Activated T-helper 2 cell treated with anti-CD3 and anti-CD28 coated beads, Interferon-gamma antibody, Interleukin-2, Interleukin-4, amounts not matched to agents 10 μg/mL and 5 μg/mL and 100 μg/mL, durations not matched to agents 14 hours and 24 hours and 36 hours (primary cell): ENCODE measurements at regions of chr5 and their contacts with region 1.

Region 1: GRCh38 chr5:134140530-134141201 is 26.2 kb downstream of the TCF7 start:
- DNase-seq: peak; percentile 50
- H3K4me3 Mint-ChIP-seq: no peak overlapping the region
- H3K27ac Mint-ChIP-seq: no peak overlapping the region
- H3K4me1 Mint-ChIP-seq: peaks cover 44% of the 10 kb centered on the region
- H3K27me3 Mint-ChIP-seq: peaks cover 3% of the 10 kb centered on the region

Region 2: DNA sequence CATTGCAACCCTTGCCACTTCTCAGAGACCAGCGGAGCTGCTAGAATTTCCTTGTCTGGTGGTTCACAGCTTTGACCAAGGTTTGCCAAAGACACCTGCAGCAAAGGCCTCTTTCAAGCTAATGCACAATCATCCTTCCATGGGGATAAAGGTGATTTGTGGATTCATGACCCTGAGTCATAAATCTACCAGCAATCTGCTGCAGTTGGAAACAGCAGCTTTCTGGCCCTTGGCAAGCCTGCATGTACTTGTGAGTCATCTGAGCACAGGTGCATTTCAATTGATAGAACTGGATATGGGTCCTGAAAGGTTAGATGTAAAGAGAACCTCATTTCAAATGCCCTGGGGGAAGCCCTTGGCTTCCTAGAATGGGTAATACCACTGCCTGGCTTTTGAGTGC is 47.8 kb before region 1 on chr5:
- intact Hi-C with region 1: no loop called
- DNase-seq: no peak
- H3K4me3 Mint-ChIP-seq: no peak overlapping the region
- H3K27ac Mint-ChIP-seq: no peak overlapping the region
- H3K4me1 Mint-ChIP-seq: peaks cover 31% of the 10 kb centered on the region
- H3K27me3 Mint-ChIP-seq: peaks cover 73% of the 10 kb centered on the region

Region 3: GRCh38 chr5:134113902-134114875 is 26.5 kb before region 1 on chr5 and contains the start of gene TCF7:
- intact Hi-C with region 1: loop called (anchors 2 kb)
- DNase-seq: peak; percentile 61
- H3K4me3 Mint-ChIP-seq: peak within 1 kb of the TSS; percentile 76
- H3K27ac Mint-ChIP-seq: peak within 1 kb of the TSS; percentile 28
- H3K4me1 Mint-ChIP-seq: peaks cover 48% of the 10 kb centered on the region
- H3K27me3 Mint-ChIP-seq: peaks cover 36% of the 10 kb centered on the region
- total RNA-seq, gene TCF7: 8.4 and 10.0 TPM in 2 replicates